ENCODE measurements at regions of chr22 and their contacts with region 1.

Region 1: DNA sequence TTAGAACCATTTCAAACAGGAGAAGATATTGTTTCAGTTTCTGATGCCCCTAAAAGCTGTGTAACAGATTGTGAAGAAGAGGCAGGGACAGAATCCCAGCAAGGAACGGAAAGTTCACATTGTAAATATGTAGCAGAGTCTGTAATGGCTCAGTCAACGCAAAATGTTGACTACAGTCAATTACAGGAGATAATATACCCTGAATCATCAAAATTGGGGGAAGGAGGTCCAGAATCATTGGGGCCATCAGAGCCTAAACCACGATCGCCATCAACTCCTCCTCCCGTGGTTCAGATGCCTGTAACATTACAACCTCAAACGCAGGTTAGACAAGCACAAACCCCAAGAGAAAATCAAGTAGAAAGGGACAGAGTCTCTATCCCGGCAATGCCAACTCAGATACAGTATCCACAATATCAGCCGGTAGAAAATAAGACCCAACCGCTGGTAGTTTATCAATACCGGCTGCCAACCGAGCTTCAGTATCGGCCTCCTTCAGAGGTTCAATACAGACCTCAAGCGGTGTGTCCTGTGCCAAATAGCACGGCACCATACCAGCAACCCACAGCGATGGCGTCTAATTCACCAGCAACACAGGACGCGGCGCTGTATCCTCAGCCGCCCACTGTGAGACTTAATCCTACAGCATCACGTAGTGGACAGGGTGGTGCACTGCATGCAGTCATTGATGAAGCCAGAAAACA is 40.8 kb downstream of the IGLL1 start:
- DNase-seq: peak; percentile 89
- H3K4me3 ChIP-seq: peak overlapping the region in 1 of 4 donors; percentile 2
- H3K27ac ChIP-seq: peak overlapping the region in 1 of 4 donors; percentile 31
- H3K4me1 ChIP-seq: peaks cover 0 to 7% (median 0%) of the 10 kb centered on the region in 4 donors
- H3K27me3 ChIP-seq: no peaks in the 10 kb centered on the region
- CTCF ChIP-seq: peak; percentile 83 to 98 (median 96)
- EP300 ChIP-seq: no peak
- POLR2A ChIP-seq: no peak

Region 2: DNA sequence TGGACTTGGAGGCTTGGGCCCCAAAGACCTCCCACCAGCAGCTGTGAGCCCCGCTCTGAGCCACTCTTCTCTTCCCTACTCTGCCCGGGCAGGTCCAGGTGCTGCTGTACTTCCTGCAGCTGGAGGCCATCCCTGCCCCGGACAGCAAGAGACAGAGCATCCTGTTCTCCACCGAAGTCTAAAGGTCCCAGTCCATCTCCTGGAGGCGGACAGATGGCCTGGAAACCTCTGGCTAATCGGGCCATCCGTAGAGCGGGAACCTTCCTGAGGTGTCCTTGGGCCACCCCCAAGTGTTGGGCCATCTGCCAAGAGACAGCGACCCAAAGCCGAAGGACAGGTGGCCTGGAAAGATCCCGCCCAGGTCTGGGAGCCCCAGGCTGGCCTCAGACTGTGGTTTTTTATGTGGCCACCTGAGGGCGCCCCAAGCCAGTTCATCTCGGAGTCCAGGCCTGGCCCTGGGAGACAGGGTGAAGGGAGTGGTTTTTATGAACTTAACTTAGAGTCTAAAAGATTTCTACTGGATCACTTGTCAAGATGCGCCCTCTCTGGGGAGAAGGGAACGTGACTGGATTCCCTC is 223.9 kb before region 1 on chr22:
- intact Hi-C with region 1: loop called (anchors 5 kb)
- DNase-seq: peak; percentile 87
- H3K4me3 ChIP-seq: no peak overlapping the region
- H3K27ac ChIP-seq: peak overlapping the region in 2 of 4 donors; percentile 29 to 48
- H3K4me1 ChIP-seq: no peaks in the 10 kb centered on the region
- H3K27me3 ChIP-seq: no peaks in the 10 kb centered on the region
- CTCF ChIP-seq: peak; percentile 49 to 59 (median 54)
- EP300 ChIP-seq: no peak
- POLR2A ChIP-seq: no peak

Region 3: GRCh38 chr22:23402275-23403151 is 136.8 kb before region 1 on chr22:
- intact Hi-C with region 1: loop called (anchors 1 kb)
- DNase-seq: peak; percentile 67
- H3K4me3 ChIP-seq: peak overlapping the region in 3 of 4 donors; percentile 42 to 44 (median 43)
- H3K27ac ChIP-seq: peak overlapping the region in 1 of 4 donors; percentile 51
- H3K4me1 ChIP-seq: peaks cover 0 to 10% (median 9%) of the 10 kb centered on the region in 4 donors
- H3K27me3 ChIP-seq: peaks cover 0 to 12% (median 0%) of the 10 kb centered on the region in 3 donors
- CTCF ChIP-seq: peak in 3 of 4 experiments; percentile 31 to 56 (median 34)
- EP300 ChIP-seq: no peak
- POLR2A ChIP-seq: no peak

Region 4: DNA sequence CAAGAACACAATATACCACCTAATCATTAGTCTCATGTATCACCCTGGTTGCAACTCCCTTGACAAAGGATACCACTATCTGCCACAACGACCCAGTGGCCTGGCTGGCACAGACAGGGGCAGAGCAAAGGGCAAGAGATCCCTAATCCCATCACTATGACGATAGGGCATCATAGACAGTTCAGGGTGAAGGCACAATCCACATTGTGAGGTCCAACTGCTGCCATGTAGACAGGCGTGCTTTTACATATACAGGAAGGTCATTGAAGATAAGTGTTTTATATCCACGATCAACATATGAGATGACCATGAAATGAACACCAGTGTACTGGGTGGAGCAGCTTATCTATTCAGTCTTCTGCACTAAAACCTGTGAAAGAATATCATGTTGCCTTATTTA is 53.8 kb before region 1 on chr22:
- intact Hi-C with region 1: loop called (anchors 10 kb)
- DNase-seq: no peak
- H3K4me3 ChIP-seq: no peak overlapping the region
- H3K27ac ChIP-seq: no peak overlapping the region
- H3K4me1 ChIP-seq: no peaks in the 10 kb centered on the region
- H3K27me3 ChIP-seq: no peaks in the 10 kb centered on the region
- CTCF ChIP-seq: no peak
- EP300 ChIP-seq: no peak
- POLR2A ChIP-seq: no peak

Region 5: GRCh38 chr22:23553924-23554870 is 14.9 kb after region 1 on chr22:
- intact Hi-C with region 1: no loop called
- DNase-seq: peak; percentile 50
- H3K4me3 ChIP-seq: no peak overlapping the region
- H3K27ac ChIP-seq: no peak overlapping the region
- H3K4me1 ChIP-seq: no peaks in the 10 kb centered on the region
- H3K27me3 ChIP-seq: peaks cover 0 to 45% (median 10%) of the 10 kb centered on the region in 3 donors
- CTCF ChIP-seq: no peak
- EP300 ChIP-seq: no peak
- POLR2A ChIP-seq: no peak

Region 6: GRCh38 chr22:23849009-23850006 is 310.0 kb after region 1 on chr22:
- intact Hi-C with region 1: loop called (anchors 5 kb)
- DNase-seq: peak; percentile 87
- H3K4me3 ChIP-seq: peak overlapping the region in 1 of 4 donors; percentile 10
- H3K27ac ChIP-seq: no peak overlapping the region
- H3K4me1 ChIP-seq: peaks cover 0 to 14% (median 9%) of the 10 kb centered on the region in 4 donors
- H3K27me3 ChIP-seq: no peaks in the 10 kb centered on the region
- CTCF ChIP-seq: peak; percentile 91 to 95 (median 93)
- EP300 ChIP-seq: no peak
- POLR2A ChIP-seq: no peak

Measured in sigmoid colon (tissue), 7 donors.